GM18951 (cell line): ENCODE measurements at regions of chr7 and their contacts with region 1.

Region 1: GRCh38 chr7:105336009-105336408 is 52.7 kb downstream of the SRPK2 start:
- POLR2A ChIP-seq: no peak

Region 2: GRCh38 chr7:105141068-105141467 is 194.9 kb before region 1 on chr7:
- in situ Hi-C with region 1: loop called (anchors 25 kb)
- POLR2A ChIP-seq: no peak

Region 3: GRCh38 chr7:105399043-105399725 is 63.2 kb after region 1 on chr7:
- in situ Hi-C with region 1: no loop called
- POLR2A ChIP-seq: no peak